PC-9 (cell line): ENCODE measurements at regions of chr15 and their contacts with region 1.

Region 1: DNA sequence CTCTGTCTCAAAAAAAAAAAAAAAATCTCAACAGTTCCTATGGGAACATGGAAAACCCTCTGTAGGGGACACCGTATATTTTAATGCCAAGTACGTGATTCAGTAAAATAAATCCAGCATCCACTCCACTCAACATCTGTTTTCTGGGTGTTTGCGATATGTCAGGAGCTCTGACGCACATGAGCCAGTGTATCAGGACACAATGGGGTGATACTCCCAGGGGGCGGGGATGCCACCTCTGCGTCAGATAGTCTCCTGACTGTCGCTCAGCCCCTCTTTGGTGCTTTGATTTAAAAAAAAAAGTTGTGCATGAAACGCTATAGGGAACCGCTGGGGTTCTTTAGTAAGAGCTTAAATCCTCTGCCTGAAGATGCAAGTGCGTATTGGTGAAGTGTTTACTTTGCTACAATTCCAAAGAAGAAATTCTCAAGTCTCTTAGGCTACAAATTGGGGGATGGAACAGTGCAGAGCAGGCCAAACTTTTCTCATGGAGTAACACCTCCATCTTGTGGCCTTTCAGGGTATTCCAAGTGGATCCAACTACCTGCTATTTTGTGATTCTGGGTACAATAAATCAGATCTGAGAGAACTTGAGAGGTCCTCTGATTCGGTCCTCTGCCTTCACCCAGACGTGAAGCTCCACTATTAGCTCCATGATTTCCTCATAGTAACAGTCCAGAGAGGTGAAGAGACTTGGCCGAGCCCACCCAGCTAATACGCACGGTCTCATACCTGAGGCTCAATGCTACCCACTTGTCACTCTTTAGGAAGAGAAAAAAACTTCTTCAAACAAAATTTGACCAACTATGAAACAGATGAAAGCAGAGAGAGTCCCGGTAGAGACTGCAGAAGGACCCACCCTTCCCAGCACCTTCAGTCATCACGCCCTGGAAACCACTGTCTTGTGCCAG is 9.3 kb upstream of the NR2E3 start:
- DNase-seq: peak; percentile 60 to 65
- H3K4me3 ChIP-seq: no peak overlapping the region
- H3K27ac ChIP-seq: no peak overlapping the region
- H3K4me1 ChIP-seq: peaks cover 13% of the 10 kb centered on the region
- H3K27me3 ChIP-seq: no peaks in the 10 kb centered on the region
- CTCF ChIP-seq: peak; percentile 85

Region 2: GRCh38 chr15:71011503-71012155 is 789.5 kb before region 1 on chr15:
- CTCF ChIA-PET with region 1: no interaction called
- POLR2A ChIA-PET with region 1: no interaction called
- intact Hi-C with region 1: loop called (anchors 1 kb)
- DNase-seq: peak in 1 of 2 experiments; percentile 21
- H3K4me3 ChIP-seq: no peak overlapping the region
- H3K27ac ChIP-seq: no peak overlapping the region
- H3K4me1 ChIP-seq: no peaks in the 10 kb centered on the region
- H3K27me3 ChIP-seq: no peaks in the 10 kb centered on the region
- CTCF ChIP-seq: peak; percentile 83

Region 3: GRCh38 chr15:71448688-71449114 is 352.4 kb before region 1 on chr15:
- CTCF ChIA-PET with region 1: interaction called, 4 read pairs
- POLR2A ChIA-PET with region 1: no interaction called
- intact Hi-C with region 1: loop called (anchors 1 kb)
- DNase-seq: peak; percentile 47
- H3K4me3 ChIP-seq: no peak overlapping the region
- H3K27ac ChIP-seq: no peak overlapping the region
- H3K4me1 ChIP-seq: peaks cover 46% of the 10 kb centered on the region
- H3K27me3 ChIP-seq: no peaks in the 10 kb centered on the region
- CTCF ChIP-seq: peak; percentile 83

Region 4: GRCh38 chr15:71780115-71780976 is 20.7 kb before region 1 on chr15:
- CTCF ChIA-PET with region 1: interaction called, 7 read pairs
- POLR2A ChIA-PET with region 1: no interaction called
- intact Hi-C with region 1: loop called (anchors 2 kb)
- DNase-seq: peak; percentile 48 to 52
- H3K4me3 ChIP-seq: peak overlapping the region; percentile 37; the same call in 1 of the 2 replicates
- H3K27ac ChIP-seq: peak overlapping the region; percentile 87
- H3K4me1 ChIP-seq: peaks cover 13% of the 10 kb centered on the region
- H3K27me3 ChIP-seq: no peaks in the 10 kb centered on the region
- CTCF ChIP-seq: peak; percentile 79

Region 5: GRCh38 chr15:72176159-72176558 is 375.1 kb after region 1 on chr15:
- CTCF ChIA-PET with region 1: interaction called, 16 read pairs
- POLR2A ChIA-PET with region 1: no interaction called
- intact Hi-C with region 1: no loop called
- DNase-seq: no peak
- H3K4me3 ChIP-seq: no peak overlapping the region
- H3K27ac ChIP-seq: no peak overlapping the region
- H3K4me1 ChIP-seq: peaks cover 39% of the 10 kb centered on the region
- H3K27me3 ChIP-seq: no peaks in the 10 kb centered on the region
- CTCF ChIP-seq: no peak

Region 6: DNA sequence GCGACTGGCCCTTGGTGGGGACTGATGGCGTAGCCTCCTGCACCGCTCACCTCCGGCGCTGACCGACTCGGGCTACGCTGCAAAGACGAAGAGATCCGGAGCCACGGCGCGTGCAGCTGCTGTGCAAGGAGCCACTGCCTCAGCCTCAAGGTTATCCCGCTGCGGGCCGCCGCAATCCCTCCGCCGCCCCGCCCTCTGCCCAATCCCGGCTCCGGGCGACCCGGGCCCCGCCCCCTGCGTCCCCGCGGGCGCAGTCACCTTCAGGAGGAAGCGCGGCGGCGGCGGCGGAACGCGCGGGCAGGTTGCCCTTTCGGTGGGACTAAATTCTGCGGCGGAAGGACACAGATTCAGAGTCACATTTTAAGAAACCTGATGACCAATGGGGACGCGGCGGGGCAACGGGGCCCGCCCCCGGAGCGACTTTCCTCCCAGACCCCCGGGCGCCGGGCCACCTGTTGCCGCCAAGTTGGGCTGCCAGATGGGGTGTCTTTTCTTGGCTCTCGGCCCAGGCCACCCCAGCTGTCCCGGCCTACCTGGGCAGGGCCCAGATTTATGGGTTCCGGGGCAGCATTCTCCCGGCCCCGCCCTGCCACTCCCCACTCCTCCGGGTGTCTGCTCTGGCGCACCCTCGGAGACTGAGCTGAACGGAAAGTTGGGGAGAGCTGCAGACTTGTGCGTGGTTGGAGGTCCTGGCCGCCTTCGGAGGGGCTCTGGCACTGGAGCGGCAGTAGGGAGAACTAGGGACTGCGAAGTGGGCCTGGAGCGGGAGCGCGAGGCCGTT is 430.2 kb after region 1 on chr15 and contains the start of gene PKM:
- CTCF ChIA-PET with region 1: no interaction called
- POLR2A ChIA-PET with region 1: no interaction called
- intact Hi-C with region 1: no loop called
- DNase-seq: peak; percentile 91 to 99
- H3K4me3 ChIP-seq: peak within 1 kb of the TSS; percentile 70
- H3K27ac ChIP-seq: peak within 1 kb of the TSS; percentile 88
- H3K4me1 ChIP-seq: peaks cover 57% of the 10 kb centered on the region
- H3K27me3 ChIP-seq: no peaks in the 10 kb centered on the region
- CTCF ChIP-seq: no peak
- total RNA-seq, gene PKM: 1,294 and 1,809 TPM in 2 replicates